ENCODE measurements at regions of chr4 and their contacts with region 1.

Region 1: DNA sequence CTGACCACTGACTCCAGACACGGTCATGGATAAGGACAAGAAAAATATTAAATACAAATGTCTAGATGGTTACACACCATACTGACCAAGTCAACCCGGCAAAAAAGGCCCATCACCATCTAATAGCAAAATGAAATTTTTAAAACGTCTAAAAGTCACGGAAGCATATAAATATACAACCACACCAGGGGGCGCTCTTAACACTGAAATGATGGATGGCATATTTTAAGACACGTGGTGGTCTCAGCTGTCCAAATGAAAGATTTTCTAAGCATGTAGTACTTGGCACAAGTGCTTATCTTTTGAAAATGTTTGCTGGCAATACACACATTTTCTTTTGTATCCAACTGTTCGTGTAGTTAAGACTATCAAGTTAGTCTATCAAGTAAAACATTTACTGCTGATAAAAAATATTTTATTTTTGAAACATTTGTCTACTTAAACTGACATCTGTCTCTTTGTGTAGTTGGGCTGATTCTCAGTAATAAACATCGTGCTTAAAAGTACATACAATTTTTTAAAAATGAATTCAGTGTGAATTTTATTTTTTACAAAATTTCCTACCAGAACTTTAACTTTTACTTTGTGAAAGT is 64.6 kb downstream of the COX7B2 start:
- DNase-seq: peak; percentile 61
- ATAC-seq: no peak
- H3K4me3 ChIP-seq: no peak overlapping the region
- H3K27ac ChIP-seq: no peak overlapping the region
- H3K4me1 ChIP-seq: no peaks in the 10 kb centered on the region; the same call in 1 of the 2 replicates
- H3K27me3 ChIP-seq: no peaks in the 10 kb centered on the region; the same call in 1 of the 2 replicates
- CTCF ChIP-seq: peak; percentile 75
- POLR2A ChIP-seq: no peak
- RAD21 ChIP-seq: peak; percentile 73

Region 2: DNA sequence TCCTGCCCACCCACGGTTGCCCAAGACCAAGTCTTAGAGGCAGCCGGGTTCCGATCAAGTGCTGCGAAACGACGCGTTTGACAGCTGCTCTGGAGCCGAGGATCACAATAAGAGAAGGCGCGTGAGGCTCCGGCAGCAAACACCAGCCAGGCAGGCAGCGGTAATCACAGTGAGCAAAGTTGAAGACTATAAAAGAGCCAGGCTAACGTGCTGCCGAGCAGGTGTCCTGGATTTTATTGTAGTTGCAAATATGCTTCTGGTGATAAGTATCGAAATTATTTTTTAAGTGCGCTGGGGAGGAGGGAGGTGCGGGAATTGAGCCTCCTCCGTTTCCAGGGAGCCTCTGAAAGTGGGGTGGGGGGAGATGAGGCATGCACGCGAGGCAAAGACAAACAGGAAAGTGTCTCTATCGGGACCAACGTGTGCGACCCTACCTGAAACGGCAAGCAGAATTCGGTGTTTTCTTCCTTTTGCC is 455.1 kb before region 1 on chr4:
- CTCF ChIA-PET with region 1: no interaction called
- POLR2A ChIA-PET with region 1: no interaction called
- dilution Hi-C with region 1: no loop called
- in situ Hi-C with region 1: no loop called
- intact Hi-C with region 1: no loop called
- DNase-seq: no peak
- ATAC-seq: peak; percentile 33; the same call in 1 of the 2 replicates
- H3K4me3 ChIP-seq: peak overlapping the region; percentile 45
- H3K27ac ChIP-seq: no peak overlapping the region
- H3K4me1 ChIP-seq: no peaks in the 10 kb centered on the region
- H3K27me3 ChIP-seq: peaks cover 27% of the 10 kb centered on the region
- CTCF ChIP-seq: no peak
- POLR2A ChIP-seq: no peak
- RAD21 ChIP-seq: no peak

Region 3: DNA sequence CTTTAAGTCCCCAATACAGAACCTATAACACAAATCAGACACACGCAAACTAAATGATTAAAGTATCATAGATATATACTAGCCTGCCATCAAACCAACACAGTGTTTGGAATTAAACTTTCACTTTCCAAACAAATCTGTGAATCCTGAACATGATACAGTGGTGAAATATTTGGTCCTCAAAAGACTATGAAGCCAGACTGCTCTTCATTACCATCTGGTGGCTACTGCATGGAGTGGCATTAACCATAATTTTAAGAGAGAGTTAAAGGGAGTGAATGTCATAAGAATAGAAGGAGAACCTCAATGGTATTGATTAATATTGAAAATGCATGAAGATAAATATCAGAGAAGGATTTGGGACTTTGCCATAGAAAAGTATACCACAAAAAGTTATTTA is 158.2 kb after region 1 on chr4:
- CTCF ChIA-PET with region 1: no interaction called
- POLR2A ChIA-PET with region 1: no interaction called
- dilution Hi-C with region 1: no loop called
- in situ Hi-C with region 1: no loop called
- intact Hi-C with region 1: loop called (anchors 1 kb)
- DNase-seq: peak; percentile 79
- ATAC-seq: peak; percentile 97
- H3K4me3 ChIP-seq: no peak overlapping the region
- H3K27ac ChIP-seq: no peak overlapping the region
- H3K4me1 ChIP-seq: no peaks in the 10 kb centered on the region
- H3K27me3 ChIP-seq: no peaks in the 10 kb centered on the region
- CTCF ChIP-seq: peak; percentile 68
- POLR2A ChIP-seq: no peak
- RAD21 ChIP-seq: peak; percentile 64

Region 4: GRCh38 chr4:47032415-47033106 is 188.1 kb after region 1 on chr4:
- CTCF ChIA-PET with region 1: no interaction called
- POLR2A ChIA-PET with region 1: no interaction called
- dilution Hi-C with region 1: no loop called
- in situ Hi-C with region 1: no loop called
- intact Hi-C with region 1: loop called (anchors 2 kb)
- DNase-seq: peak; percentile 65
- ATAC-seq: peak; percentile 96
- H3K4me3 ChIP-seq: peak overlapping the region; percentile 58
- H3K27ac ChIP-seq: peak overlapping the region; percentile 3; the same call in 1 of the 2 replicates
- H3K4me1 ChIP-seq: no peaks in the 10 kb centered on the region
- H3K27me3 ChIP-seq: no peaks in the 10 kb centered on the region; the same call in 1 of the 2 replicates
- CTCF ChIP-seq: peak; percentile 80
- POLR2A ChIP-seq: no peak
- RAD21 ChIP-seq: peak; percentile 75

Region 5: GRCh38 chr4:47122592-47123291 is 278.3 kb after region 1 on chr4:
- CTCF ChIA-PET with region 1: interaction called, 4 read pairs
- POLR2A ChIA-PET with region 1: no interaction called
- dilution Hi-C with region 1: no loop called
- in situ Hi-C with region 1: no loop called
- intact Hi-C with region 1: loop called (anchors 5 kb)
- DNase-seq: peak; percentile 81
- ATAC-seq: peak; percentile 81
- H3K4me3 ChIP-seq: no peak overlapping the region
- H3K27ac ChIP-seq: no peak overlapping the region
- H3K4me1 ChIP-seq: peaks cover 2% of the 10 kb centered on the region
- H3K27me3 ChIP-seq: no peaks in the 10 kb centered on the region
- CTCF ChIP-seq: peak; percentile 88
- POLR2A ChIP-seq: no peak
- RAD21 ChIP-seq: peak; percentile 84

Region 6: GRCh38 chr4:47145630-47146029 is 301.2 kb after region 1 on chr4:
- CTCF ChIA-PET with region 1: no interaction called
- POLR2A ChIA-PET with region 1: no interaction called
- dilution Hi-C with region 1: no loop called
- in situ Hi-C with region 1: no loop called
- intact Hi-C with region 1: no loop called
- DNase-seq: peak; percentile 92
- ATAC-seq: peak; percentile 90
- H3K4me3 ChIP-seq: no peak overlapping the region
- H3K27ac ChIP-seq: no peak overlapping the region
- H3K4me1 ChIP-seq: no peaks in the 10 kb centered on the region
- H3K27me3 ChIP-seq: no peaks in the 10 kb centered on the region
- CTCF ChIP-seq: no peak
- POLR2A ChIP-seq: no peak
- RAD21 ChIP-seq: no peak

Region 7: GRCh38 chr4:47213971-47214370 is 369.6 kb after region 1 on chr4:
- CTCF ChIA-PET with region 1: no interaction called
- POLR2A ChIA-PET with region 1: no interaction called
- dilution Hi-C with region 1: no loop called
- in situ Hi-C with region 1: no loop called
- intact Hi-C with region 1: loop called (anchors 10 kb)
- DNase-seq: peak; percentile 96
- ATAC-seq: peak; percentile 65
- H3K4me3 ChIP-seq: no peak overlapping the region
- H3K27ac ChIP-seq: no peak overlapping the region
- H3K4me1 ChIP-seq: peaks cover 3% of the 10 kb centered on the region; the same call in 1 of the 2 replicates
- H3K27me3 ChIP-seq: no peaks in the 10 kb centered on the region
- CTCF ChIP-seq: no peak
- POLR2A ChIP-seq: no peak
- RAD21 ChIP-seq: no peak